OCI-LY7 (cell line): ENCODE measurements at regions of chr14 and their contacts with region 1.

Region 1: DNA sequence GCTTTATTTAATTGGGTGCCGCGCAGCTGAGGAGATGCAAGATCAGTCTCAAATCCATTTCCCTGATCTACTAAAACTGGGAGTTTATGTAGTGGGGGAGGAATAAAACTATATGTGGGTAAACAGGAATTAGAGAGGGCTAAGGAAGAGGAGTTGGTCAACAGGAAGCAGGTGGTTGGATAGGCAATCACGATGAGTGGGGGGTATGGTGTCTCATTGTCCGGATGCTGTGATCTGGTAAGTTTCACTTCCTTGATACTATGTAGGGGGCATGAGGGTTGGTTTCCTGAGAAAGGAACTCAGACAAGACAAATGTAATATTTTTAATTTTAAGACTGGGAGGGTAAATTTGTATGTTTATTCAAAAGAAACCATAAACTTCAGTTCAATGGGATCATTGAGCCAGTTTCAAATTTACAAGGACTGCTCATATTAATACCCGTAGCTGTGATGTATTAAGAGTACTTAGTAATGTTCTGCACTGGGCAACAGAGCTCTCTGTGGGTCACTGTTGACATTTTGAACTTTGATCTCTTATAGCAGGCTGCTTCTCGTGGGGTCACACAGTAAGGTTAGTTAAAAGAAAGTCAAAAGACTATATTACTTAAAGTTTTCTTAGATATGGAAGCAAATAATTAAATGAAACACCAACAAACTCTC is 786.2 kb upstream of the FBXO33 start:
- DNase-seq: peak; percentile 93
- H3K4me3 ChIP-seq: peak overlapping the region; percentile 43
- H3K27ac ChIP-seq: peak overlapping the region; percentile 96
- H3K4me1 ChIP-seq: peaks cover 61% of the 10 kb centered on the region
- CTCF ChIP-seq: no peak

Region 2: GRCh38 chr14:39768589-39768988 is 449.8 kb before region 1 on chr14:
- CTCF ChIA-PET with region 1: no interaction called
- POLR2A ChIA-PET with region 1: no interaction called
- intact Hi-C with region 1: loop called (anchors 5 kb)
- DNase-seq: peak; percentile 9
- H3K4me3 ChIP-seq: no peak overlapping the region
- H3K27ac ChIP-seq: no peak overlapping the region
- H3K4me1 ChIP-seq: peaks cover 61% of the 10 kb centered on the region
- CTCF ChIP-seq: no peak